ENCODE measurements at regions of chr6 and their contacts with region 1.

Region 1: GRCh38 chr6:33200219-33201146 is at the starts of genes RXRB and SLC39A7:
- DNase-seq: peak; percentile 95 to 99 (median 98)

Region 2: DNA sequence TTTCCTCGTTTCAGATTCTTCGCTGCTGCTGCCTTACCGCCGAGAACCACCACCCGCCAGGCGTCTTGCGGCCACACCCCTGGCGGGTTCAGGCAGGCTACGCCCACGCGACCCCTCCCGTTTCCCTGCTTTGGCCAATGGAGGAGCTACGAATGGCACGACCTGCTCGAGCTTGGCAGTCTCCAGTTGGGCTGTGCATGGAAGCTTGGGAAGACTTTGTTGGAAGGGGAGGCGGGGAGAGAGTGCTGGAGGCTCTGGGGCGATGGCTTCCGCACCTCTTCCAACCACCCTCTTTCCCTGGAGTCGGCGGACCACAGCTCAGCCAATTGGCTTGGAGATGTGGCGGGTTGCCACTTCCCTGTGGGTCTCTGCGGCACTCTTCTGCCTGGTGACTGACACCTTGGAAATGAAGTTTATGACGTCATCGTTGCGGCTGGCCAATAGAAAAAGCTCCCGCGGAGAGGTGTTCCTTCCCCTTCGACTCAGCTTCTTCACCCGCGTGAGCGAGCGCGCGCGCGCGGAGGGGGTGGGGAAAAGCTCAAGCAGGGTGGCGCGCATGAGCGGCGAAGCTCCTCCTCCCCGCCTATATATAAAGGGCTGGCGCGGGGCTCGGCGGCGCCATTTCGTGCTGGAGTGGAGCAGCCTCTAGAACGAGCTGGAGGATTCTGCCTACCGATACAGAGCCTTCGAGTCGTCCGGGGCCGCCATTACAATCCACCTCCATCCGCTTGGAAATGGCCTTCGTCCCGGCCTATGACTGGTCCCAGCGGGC is 228.7 kb before region 1 on chr6:
- intact Hi-C with region 1: loop called (anchors 10 kb)
- DNase-seq: peak; percentile 98 to 100 (median 99)

Region 3: GRCh38 chr6:33161354-33162331 is 38.8 kb before region 1 on chr6:
- intact Hi-C with region 1: loop called (anchors 5 kb)
- DNase-seq: peak; percentile 50 to 93 (median 84)

Region 4: GRCh38 chr6:33356295-33356694 is 155.8 kb after region 1 on chr6:
- intact Hi-C with region 1: no loop called
- DNase-seq: no peak

Region 5: DNA sequence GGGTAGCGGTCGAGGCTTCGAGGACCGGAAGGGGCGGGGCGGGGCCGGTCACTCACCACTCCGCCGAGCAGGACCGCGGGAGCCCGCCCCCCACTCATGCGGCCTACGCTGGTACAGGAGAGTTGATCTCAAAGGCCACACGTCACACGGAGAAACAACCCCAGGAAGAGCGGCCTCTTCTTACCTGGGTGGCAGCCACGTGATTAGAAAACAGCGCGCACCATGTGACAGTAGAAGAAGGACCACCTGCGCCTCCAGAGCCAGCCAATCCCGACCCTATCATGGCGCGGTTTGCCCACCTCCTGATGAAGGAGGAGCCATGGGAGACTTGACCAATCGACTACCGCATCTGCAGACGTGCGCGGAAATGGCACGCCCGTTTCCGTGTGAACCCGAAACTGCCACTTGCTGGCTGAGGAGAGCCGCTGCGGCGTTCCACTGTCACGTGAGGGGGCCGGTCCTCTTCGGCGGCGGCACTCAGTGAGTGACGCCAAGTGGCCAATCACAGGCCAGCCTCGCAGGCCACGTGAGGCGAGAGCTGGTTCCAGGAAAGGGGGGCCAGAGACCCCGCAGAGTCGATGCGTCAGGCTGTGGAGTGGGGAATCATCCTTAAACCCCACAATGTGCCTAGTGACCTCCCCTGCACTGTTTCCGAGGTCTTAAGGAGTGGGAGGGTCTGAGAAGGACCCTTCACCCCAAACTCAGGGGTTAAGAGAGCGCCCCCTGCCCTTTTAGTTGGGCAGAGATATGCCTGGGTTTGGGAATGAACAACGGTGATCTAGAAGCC is 217.6 kb after region 1 on chr6 and contains the start of gene CUTA:
- intact Hi-C with region 1: loop called (anchors 10 kb)
- DNase-seq: peak; percentile 99 to 100 (median 100)

Measured in head of caudate nucleus (tissue), 42 donors.